ENCODE measurements at regions of chr10 and their contacts with region 1.

Region 1: DNA sequence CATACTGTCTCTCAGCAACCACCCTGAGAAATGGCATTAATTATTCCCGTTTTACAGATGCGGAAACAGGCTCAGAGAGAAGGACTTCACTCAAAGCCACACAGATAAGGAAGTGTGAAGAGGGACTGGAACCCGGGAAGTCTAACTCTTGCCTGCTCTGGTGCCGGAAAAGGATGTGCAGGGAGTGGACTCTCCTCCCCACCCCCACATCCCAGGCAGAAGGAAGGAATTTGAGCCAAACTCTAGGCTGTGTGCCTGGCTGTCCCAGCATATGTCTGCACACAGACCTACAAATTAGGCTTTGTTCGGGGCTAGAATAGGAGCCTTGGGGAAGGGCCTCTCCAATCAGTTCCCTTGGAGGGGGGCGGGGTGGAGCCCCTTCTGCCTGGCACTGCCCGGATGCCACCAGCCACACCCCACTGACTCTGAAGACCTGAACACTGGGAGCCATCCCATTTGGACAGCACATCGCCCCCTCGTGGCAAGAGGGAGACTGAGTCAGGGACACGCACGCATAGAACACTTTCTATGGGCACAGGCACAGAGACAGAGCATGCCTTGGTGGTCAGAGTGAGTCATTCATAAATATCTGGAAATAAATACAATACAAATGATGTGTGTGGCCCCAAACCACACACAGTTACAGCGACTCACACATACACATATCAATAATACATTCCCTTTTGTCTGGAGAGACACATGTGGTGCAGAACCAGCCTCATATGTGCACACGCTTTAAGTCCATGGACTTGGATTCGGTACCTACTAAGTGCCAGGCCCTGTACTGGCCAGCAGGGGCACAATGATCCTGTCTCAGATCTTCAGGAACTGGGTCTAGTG is 13.1 kb downstream of the LZTS2 start:
- DNase-seq: peak; percentile 93
- H3K4me3 ChIP-seq: no peak overlapping the region
- H3K27ac ChIP-seq: peak overlapping the region; percentile 30
- H3K4me1 ChIP-seq: peaks cover 54% of the 10 kb centered on the region
- H3K27me3 ChIP-seq: no peaks in the 10 kb centered on the region
- CTCF ChIP-seq: peak; percentile 76

Region 2: GRCh38 chr10:100670828-100671479 is 341.8 kb before region 1 on chr10:
- CTCF ChIA-PET with region 1: no interaction called
- dilution Hi-C with region 1: no loop called
- in situ Hi-C with region 1: no loop called
- intact Hi-C with region 1: loop called (anchors 5 kb)
- DNase-seq: no peak
- H3K4me3 ChIP-seq: no peak overlapping the region
- H3K27ac ChIP-seq: no peak overlapping the region
- H3K4me1 ChIP-seq: no peaks in the 10 kb centered on the region
- H3K27me3 ChIP-seq: peaks cover 18% of the 10 kb centered on the region
- CTCF ChIP-seq: peak in 1 of 2 donors; percentile 47

Region 3: GRCh38 chr10:100934084-100934659 is 78.6 kb before region 1 on chr10:
- CTCF ChIA-PET with region 1: no interaction called
- dilution Hi-C with region 1: no loop called
- in situ Hi-C with region 1: no loop called
- intact Hi-C with region 1: loop called (anchors 1 kb)
- DNase-seq: no peak
- H3K4me3 ChIP-seq: no peak overlapping the region
- H3K27ac ChIP-seq: no peak overlapping the region
- H3K4me1 ChIP-seq: no peaks in the 10 kb centered on the region
- H3K27me3 ChIP-seq: no peaks in the 10 kb centered on the region
- CTCF ChIP-seq: peak; percentile 54 to 58

Region 4: DNA sequence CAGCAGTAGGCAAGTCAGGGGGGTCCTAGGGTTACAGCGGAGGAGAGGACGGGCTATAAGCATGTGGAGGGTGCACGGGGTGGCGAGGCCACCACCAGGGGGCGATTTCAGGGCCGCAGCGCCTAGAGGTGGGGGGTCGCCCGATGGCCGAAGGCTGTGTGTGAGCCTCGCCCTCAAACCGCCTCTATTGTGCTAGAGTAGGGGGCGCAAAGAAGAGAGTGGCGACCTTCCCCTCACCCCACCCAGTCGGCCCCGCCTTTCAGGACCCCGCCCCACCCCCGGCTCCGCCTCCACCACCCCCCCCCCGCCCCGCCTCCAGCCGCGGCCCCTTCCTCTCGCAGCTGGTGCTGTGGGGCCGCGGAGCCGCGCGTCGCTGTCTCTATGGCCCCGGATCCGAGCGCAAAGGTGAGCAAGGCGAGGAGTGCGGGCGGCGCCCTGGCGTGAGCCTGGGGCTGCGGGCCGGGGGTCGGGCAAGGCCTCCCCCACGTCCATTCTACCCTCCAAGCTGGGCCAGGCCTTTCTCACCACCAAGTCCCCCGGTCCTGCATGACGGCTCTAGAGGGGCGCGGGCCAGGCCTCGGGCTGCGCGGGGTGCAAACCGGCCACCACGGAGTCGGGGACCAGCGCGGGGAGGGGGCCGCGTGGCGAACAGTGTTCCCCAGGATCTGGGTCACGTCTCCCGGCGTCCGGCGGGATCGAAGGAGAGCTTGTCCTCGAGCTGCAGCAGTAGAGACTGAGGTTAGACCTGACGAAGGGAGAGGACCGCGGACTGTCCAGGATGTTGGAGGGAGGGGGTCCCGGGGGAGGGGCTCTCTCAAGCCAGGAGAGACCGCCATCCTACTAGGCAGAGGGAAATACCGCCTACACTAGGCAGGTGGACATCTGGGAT is 43.3 kb before region 1 on chr10 and contains the start of gene SEMA4G:
- CTCF ChIA-PET with region 1: no interaction called
- dilution Hi-C with region 1: no loop called
- in situ Hi-C with region 1: no loop called
- intact Hi-C with region 1: loop called (anchors 1 kb)
- DNase-seq: no peak
- H3K4me3 ChIP-seq: peak within 1 kb of the TSS; percentile 40 to 58 (median 52)
- H3K27ac ChIP-seq: no peak within 1 kb of the TSS
- H3K4me1 ChIP-seq: peaks cover 10% of the 10 kb centered on the region
- H3K27me3 ChIP-seq: no peaks in the 10 kb centered on the region
- CTCF ChIP-seq: peak; percentile 52 to 74
- total RNA-seq, gene SEMA4G: 0.83 to 3.7 TPM

Region 5: DNA sequence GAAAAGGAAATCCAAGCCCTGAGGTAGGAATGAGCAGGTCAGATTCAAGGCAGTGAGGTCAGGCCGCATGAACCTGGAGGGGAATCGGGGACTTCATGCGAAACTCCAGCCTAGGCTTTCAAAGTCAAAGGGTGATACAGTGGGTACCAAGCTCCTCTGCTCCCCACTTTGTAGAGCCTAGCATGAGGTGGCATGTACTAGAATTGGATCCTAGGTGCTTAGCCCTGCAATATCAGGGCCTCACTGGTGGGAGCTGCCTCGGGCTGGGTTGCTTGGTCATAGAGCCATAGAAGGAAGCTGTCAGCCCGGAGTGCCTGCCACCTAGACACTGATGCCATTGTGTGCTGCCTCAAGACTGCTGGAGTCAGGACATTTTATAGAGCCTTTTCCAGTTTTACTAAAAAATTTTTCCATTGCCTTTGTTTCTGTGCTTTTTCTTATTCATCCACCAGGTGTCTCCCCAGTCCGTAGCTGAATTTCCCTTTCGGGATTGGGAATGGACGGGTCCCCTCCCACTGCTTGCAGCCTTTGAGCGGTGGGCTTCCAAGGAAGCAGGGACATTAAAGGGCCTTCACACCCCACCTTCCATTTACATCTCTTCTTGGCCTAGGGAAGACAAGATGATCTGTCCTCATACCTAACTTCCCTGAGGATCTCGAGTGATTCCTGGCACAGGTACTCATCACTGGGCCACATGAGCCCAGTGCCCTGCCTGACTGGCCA is 18.6 kb before region 1 on chr10:
- CTCF ChIA-PET with region 1: interaction called, 12 read pairs
- dilution Hi-C with region 1: no loop called
- in situ Hi-C with region 1: no loop called
- intact Hi-C with region 1: loop called (anchors 1 kb)
- DNase-seq: no peak
- H3K4me3 ChIP-seq: no peak overlapping the region
- H3K27ac ChIP-seq: no peak overlapping the region
- H3K4me1 ChIP-seq: peaks cover 20% of the 10 kb centered on the region
- H3K27me3 ChIP-seq: no peaks in the 10 kb centered on the region
- CTCF ChIP-seq: peak; percentile 54 to 70

Region 6: DNA sequence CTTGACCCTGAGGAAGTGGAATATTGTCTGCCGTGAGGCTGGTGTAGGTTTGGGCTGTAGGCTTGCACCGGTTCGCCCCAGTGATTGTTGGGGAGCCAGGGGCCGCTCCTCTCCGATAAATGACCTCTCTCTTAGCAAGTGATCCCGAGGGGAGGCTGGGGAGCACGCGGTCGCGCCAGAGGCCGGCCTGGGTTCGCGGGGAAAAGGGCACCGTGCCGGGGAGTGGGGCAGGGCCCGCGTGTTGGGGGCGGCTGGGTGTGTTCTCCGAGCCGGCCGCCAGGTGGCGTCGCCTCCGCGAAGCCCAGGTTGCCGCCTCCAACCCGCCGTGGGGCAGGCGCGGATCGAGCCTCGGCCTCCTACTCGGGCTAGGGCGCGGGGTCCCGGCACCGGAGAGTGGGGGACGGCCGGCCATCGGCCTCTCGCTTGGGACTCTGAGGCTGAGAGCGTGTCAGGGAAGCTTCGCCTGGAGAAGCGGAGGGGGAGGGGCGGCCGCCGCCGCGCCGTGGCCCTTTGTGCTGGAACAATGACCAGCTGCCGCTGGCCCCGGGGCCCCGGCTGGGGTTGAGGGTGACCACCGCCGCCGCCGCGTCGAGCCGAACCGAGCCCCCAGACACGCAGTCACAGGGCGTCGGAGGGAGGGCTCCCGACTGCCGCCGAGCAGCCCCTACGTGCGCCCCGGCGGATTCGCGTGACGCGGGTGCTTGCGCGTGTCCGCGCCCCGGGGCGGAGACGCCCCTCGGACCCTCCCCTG is 13.6 kb before region 1 on chr10:
- CTCF ChIA-PET with region 1: interaction called, 12 read pairs
- dilution Hi-C with region 1: no loop called
- in situ Hi-C with region 1: no loop called
- intact Hi-C with region 1: loop called (anchors 1 kb)
- DNase-seq: peak; percentile 60
- H3K4me3 ChIP-seq: peak overlapping the region; percentile 84 to 90 (median 90)
- H3K27ac ChIP-seq: peak overlapping the region; percentile 63
- H3K4me1 ChIP-seq: peaks cover 38% of the 10 kb centered on the region
- H3K27me3 ChIP-seq: no peaks in the 10 kb centered on the region
- CTCF ChIP-seq: peak; percentile 51 to 85

Region 7: DNA sequence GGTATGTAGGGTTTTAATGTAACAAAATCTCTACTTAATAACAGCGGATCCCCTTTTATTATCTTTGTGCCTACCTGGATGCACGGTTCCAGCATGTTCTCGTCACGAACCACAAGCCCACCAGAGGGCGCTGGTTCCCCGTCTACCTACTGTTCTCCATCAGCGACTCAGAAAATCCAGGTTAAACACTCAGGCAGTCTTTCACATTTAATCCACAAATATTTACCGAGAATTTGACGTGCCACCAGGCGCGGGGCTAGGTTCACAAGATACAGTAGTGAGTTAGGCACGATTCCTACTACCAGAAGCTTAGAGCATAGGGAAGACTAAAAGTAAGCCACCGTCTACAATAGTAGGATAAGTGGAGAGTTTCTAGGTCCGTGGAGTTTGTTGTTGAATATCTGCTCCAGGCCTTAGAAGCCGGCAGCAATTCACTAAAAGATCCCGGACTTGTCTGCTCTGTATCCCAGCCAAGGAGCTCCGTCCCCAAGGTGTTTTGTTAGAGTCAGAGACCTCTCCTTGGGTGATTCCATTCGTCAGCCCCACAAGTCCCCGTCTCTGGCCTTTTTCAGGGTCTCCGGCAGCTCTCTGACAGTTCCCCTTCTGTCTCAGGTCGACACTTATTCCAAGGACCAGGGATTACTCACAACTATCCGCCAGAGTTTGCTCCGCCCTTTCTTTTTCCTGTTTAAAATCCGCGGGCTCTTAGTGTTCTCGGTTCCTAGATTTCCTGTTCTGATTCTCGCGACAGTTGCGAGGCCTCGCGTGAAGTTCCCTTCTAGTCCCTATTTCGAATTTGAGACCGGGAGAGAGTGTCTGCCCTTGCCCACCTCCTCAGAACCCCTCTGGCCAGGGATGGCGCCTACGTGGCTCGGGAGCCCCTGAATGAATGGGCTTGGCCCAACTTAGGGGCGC is 47.5 kb after region 1 on chr10:
- CTCF ChIA-PET with region 1: interaction called, 9 read pairs
- dilution Hi-C with region 1: no loop called
- in situ Hi-C with region 1: loop called in 1 of 2 experiments (anchors 10 kb)
- intact Hi-C with region 1: no loop called
- DNase-seq: peak; percentile 93
- H3K4me3 ChIP-seq: peak overlapping the region; percentile 80 to 100 (median 81)
- H3K27ac ChIP-seq: peak overlapping the region; percentile 95
- H3K4me1 ChIP-seq: peaks cover 25% of the 10 kb centered on the region
- H3K27me3 ChIP-seq: no peaks in the 10 kb centered on the region
- CTCF ChIP-seq: peak; percentile 88 to 95